GM13977 (cell line): ENCODE measurements at regions of chr13 and their contacts with region 1.

Region 1: GRCh38 chr13:26867451-26868091 is 107.0 kb upstream of the GPR12 start:
- DNase-seq: no peak
- CTCF ChIP-seq: no peak

Region 2: DNA sequence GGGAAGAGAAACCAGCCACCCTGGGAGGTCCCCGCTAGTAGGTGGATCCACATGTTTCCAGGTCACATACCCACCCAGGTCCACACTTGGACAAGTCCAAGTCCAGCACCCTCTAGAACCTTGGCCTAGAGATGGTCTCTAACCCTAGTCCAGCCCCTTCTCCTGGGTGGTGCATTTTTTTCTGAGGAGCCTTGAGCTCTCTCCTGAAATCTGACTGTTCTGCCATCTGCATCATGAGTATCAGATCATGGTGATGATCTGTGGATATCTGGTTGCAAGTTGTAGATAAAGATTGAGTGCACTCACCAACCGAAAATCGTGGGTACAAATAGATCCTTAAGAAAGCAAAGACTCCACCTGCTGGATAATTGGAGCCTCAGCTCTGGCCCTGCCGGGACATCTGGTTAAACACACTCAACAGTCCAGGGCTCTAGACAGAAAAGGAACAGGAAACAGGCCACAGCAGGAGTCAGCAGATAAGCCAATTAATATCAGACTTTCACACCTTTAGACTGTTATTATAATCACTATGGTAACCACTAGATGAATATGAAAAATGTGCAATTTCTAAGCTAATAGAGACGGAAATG is 148.1 kb before region 1 on chr13:
- in situ Hi-C with region 1: loop called (anchors 10 kb)
- DNase-seq: no peak
- CTCF ChIP-seq: no peak